ENCODE measurements at regions of chrX and their contacts with region 1.

Region 1: DNA sequence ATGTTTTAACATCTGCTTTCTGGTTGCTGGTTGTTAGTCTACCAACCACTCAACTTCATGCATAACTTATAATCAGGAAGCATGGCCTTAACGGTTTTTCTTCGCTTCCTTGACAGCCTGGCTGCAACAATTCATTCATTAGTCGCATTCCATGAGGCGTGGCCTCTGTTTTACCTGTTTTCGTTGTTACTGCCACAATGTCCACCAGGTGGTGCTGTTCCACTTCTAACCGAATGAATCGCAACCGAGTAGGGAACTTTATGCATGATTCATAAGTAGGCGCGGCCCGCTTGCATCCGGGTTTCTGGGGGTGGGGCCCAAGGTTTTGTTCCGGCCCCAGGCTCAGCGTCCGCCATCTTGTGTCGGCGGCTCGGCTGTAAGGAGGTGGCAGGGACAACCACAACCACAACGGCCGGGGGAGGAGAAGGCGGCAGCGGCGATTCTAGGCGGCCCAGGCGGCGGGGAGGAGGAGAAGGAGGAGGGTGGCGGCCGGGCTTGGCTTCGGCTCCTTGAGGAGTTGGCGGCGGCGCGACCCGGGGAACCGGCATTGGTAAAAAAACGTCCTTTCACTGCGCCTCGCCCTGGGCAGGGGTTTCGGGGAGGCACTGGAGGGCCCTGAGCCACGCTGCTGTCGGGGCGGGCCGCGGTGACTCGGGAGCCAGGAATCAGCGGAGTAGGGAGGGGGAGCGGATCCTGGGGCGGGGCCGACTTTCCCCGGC is at the start of gene UBA1:
- DNase-seq: peak; percentile 90
- H3K4me3 ChIP-seq: peak within 1 kb of the TSS; percentile 82
- H3K27ac ChIP-seq: peak within 1 kb of the TSS; percentile 97
- H3K4me1 ChIP-seq: peaks cover 52% of the 10 kb centered on the region
- H3K27me3 ChIP-seq: no peaks in the 10 kb centered on the region
- CTCF ChIP-seq: peak; percentile 71
- total RNA-seq, gene UBA1: 99.8 TPM

Region 2: GRCh38 chrX:47384502-47384901 is 190.9 kb after region 1 on chrX:
- intact Hi-C with region 1: loop called (anchors 10 kb)
- DNase-seq: peak; percentile 18
- H3K4me3 ChIP-seq: no peak overlapping the region
- H3K27ac ChIP-seq: no peak overlapping the region
- H3K4me1 ChIP-seq: no peaks in the 10 kb centered on the region
- H3K27me3 ChIP-seq: no peaks in the 10 kb centered on the region
- CTCF ChIP-seq: peak; percentile 73